ENCODE measurements at regions of chr12 and their contacts with region 1.

Region 1: GRCh38 chr12:49673446-49674317 is 33.5 kb downstream of the FMNL3 start:
- DNase-seq: no peak
- H3K4me3 Mint-ChIP-seq: no peak overlapping the region
- H3K27ac Mint-ChIP-seq: peak overlapping the region; percentile 81
- H3K4me1 Mint-ChIP-seq: peaks cover 75% of the 10 kb centered on the region
- H3K27me3 Mint-ChIP-seq: no peaks in the 10 kb centered on the region

Region 2: GRCh38 chr12:49598527-49598926 is 75.2 kb before region 1 on chr12:
- CTCF ChIA-PET with region 1: no interaction called
- POLR2A ChIA-PET with region 1: no interaction called
- DNase-seq: no peak
- H3K4me3 Mint-ChIP-seq: no peak overlapping the region
- H3K27ac Mint-ChIP-seq: no peak overlapping the region
- H3K4me1 Mint-ChIP-seq: no peaks in the 10 kb centered on the region
- H3K27me3 Mint-ChIP-seq: no peaks in the 10 kb centered on the region

Region 3: GRCh38 chr12:49609746-49610089 is 64.0 kb before region 1 on chr12:
- CTCF ChIA-PET with region 1: no interaction called
- POLR2A ChIA-PET with region 1: no interaction called
- DNase-seq: no peak
- H3K4me3 Mint-ChIP-seq: no peak overlapping the region
- H3K27ac Mint-ChIP-seq: no peak overlapping the region
- H3K4me1 Mint-ChIP-seq: peaks cover 7% of the 10 kb centered on the region
- H3K27me3 Mint-ChIP-seq: peaks cover 19% of the 10 kb centered on the region

Region 4: DNA sequence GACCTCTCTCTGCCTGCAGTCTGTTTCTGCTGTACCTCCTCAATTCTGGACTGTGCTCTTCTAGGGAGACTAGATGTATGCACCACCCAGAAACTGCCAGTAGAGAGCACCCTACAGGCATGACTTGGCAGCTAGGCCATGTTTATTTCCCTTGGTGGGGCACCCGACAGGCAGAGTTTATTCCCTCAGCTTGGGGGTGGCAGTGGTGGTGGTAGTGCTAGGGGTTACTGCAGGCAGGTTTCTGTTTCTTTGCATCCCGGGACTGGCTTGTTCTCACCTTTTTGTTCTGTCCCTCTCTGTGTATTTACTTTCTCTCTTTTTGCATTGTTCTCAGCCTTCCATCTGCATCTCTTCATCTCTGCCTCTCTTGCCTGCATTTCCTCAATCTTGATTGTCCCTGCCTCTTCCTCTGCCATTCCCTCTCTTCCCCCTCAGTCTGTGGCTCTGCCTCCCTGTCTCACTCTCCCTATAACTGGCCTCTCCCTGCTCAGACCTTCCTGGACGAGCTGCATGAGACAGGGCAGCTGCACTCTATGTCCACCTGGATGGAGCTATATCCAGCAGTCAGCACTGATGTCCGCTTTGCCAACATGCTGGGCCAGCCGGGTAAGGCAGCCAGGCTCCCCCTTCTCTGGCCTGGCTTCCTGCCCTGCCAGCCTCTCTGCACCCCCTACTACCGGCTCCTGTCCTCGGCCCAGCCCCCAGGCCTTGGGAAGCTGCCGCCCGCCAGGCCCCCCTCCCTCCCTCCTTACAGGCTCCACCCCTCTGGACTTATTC is 36.5 kb before region 1 on chr12:
- CTCF ChIA-PET with region 1: interaction called, 14 read pairs
- POLR2A ChIA-PET with region 1: interaction called, 3 read pairs
- DNase-seq: peak; percentile 78
- H3K4me3 Mint-ChIP-seq: no peak overlapping the region
- H3K27ac Mint-ChIP-seq: peak overlapping the region; percentile 58
- H3K4me1 Mint-ChIP-seq: peaks cover 12% of the 10 kb centered on the region
- H3K27me3 Mint-ChIP-seq: no peaks in the 10 kb centered on the region

Region 5: DNA sequence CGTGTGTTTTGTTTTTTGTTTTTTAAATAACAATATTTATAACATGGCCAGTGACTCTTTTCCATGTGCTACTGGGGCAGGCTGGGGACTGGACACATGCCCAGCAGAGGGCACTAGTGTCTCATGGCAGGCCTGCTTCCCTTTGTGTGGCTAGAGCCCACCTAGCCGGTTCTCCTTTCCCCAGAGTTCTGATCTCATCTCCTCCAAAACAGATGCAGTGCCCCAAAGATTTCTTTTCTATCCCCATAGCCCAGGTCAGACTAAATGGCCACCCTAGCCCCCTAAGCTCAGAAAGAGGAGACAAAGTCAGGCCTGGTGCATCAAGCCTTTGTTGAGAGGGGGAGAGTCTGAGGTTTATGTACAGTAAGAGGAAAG is 29.1 kb before region 1 on chr12:
- CTCF ChIA-PET with region 1: interaction called, 16 read pairs
- POLR2A ChIA-PET with region 1: no interaction called
- DNase-seq: peak; percentile 87
- H3K4me3 Mint-ChIP-seq: no peak overlapping the region
- H3K27ac Mint-ChIP-seq: peak overlapping the region; percentile 87
- H3K4me1 Mint-ChIP-seq: peaks cover 40% of the 10 kb centered on the region
- H3K27me3 Mint-ChIP-seq: no peaks in the 10 kb centered on the region

Region 6: DNA sequence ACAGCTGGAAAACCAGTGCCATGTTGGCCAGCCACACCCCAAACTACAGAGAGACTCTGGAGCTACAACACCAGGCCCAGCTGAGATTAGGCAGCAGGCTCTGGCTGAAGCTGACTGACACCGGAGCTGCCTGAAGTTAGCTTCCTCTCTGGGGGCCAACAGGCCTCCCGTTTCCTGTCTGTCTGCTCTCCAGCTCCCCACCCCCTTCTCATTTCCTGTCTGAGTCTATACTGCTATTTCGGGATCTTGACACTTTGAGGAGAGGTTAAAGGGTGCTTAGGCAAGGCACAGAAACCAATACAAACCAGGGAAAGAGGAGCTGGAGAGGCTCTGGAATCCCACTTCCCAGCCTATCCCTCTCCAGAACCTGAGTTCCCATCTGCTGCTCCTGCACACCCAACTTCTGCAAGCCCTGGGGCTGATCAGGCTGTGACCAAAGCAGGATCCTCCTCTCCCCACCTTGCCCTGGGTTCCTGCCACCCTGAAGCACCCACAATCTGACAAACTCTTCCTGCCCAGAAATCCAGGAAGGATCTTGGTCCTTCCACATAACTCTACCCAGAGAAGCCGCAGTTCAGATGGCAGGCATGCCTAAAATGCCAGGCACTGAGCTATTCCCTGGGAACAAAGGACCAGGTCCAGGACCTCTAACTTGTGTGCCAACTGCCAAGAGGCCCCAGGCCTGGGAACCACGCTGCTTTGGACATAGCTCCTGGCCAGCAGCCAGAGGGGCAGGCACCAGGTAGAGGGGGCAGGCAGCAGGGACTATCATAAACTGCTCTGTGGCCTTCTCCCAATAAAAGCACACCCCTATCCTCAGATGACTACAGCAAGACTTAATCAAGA is 10.5 kb before region 1 on chr12:
- CTCF ChIA-PET with region 1: interaction called, 34 read pairs
- POLR2A ChIA-PET with region 1: no interaction called
- DNase-seq: peak; percentile 85
- H3K4me3 Mint-ChIP-seq: peak overlapping the region; percentile 69
- H3K27ac Mint-ChIP-seq: peak overlapping the region; percentile 96
- H3K4me1 Mint-ChIP-seq: peaks cover 70% of the 10 kb centered on the region
- H3K27me3 Mint-ChIP-seq: no peaks in the 10 kb centered on the region

Region 7: DNA sequence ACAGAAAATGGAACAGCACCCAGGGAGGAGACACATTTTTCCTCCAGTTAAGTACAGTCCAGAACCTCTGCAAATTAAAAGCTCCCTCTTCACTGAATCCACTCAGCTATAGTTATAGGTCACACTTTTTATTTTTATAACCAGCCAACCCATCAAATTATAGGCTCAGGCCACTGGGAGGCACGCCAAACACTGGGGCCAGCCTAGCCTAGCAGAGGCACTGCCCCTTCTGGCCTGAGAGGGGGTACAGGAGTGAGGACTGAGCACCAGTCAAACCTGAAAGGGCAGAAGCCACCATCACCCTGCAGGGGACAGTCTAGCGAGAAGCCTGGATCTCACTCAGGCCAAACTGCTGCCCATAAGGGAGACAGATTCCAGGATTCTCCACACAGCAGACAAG is 14.3 kb after region 1 on chr12:
- CTCF ChIA-PET with region 1: interaction called, 16 read pairs
- POLR2A ChIA-PET with region 1: interaction called, 5 read pairs
- DNase-seq: no peak
- H3K4me3 Mint-ChIP-seq: no peak overlapping the region
- H3K27ac Mint-ChIP-seq: no peak overlapping the region
- H3K4me1 Mint-ChIP-seq: peaks cover 32% of the 10 kb centered on the region
- H3K27me3 Mint-ChIP-seq: no peaks in the 10 kb centered on the region

Region 8: DNA sequence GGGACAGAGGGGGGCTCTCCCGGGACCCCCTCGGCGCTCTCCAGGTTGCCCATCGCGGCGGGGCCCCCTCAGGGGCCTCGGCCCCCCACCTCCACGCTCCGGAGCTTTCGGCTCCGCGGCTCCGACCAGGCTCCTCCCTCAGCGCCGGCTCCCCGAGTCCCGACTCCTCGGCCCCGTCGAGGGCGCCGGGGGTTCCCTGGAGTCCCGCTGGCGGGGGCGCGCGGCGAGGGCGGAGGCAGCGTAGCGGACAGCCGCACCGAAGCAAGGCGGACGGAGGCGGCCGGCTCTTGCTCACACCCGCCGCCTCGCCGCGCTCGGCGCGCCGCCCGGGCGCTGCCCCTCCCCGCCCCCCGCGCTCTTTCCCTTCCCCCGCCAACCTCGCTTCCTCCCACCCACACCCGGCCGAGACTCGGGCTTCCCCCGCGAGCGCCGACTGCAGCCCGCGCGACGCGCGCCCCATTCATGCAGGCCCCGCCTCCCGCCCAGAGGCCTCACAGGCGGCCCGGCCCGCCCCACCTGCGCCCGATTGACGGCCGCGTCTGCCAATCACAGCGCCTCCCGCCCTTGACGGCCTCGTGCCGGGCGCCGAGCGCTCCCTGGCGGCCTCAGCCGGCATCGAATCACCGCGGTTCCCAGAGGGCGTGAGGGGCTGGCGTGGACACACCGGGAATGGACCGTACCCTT is 33.6 kb after region 1 on chr12 and contains the start of gene FMNL3:
- CTCF ChIA-PET with region 1: interaction called, 57 read pairs
- POLR2A ChIA-PET with region 1: interaction called, 3 read pairs
- DNase-seq: peak; percentile 98
- H3K4me3 Mint-ChIP-seq: peak within 1 kb of the TSS; percentile 90
- H3K27ac Mint-ChIP-seq: peak within 1 kb of the TSS; percentile 88
- H3K4me1 Mint-ChIP-seq: peaks cover 44% of the 10 kb centered on the region
- H3K27me3 Mint-ChIP-seq: peaks cover 26% of the 10 kb centered on the region
- total RNA-seq, gene FMNL3: 37.4 to 38.2 TPM